Mammary epithelial cell (primary cell): ENCODE measurements at regions of chr12 and their contacts with region 1.

Region 1: DNA sequence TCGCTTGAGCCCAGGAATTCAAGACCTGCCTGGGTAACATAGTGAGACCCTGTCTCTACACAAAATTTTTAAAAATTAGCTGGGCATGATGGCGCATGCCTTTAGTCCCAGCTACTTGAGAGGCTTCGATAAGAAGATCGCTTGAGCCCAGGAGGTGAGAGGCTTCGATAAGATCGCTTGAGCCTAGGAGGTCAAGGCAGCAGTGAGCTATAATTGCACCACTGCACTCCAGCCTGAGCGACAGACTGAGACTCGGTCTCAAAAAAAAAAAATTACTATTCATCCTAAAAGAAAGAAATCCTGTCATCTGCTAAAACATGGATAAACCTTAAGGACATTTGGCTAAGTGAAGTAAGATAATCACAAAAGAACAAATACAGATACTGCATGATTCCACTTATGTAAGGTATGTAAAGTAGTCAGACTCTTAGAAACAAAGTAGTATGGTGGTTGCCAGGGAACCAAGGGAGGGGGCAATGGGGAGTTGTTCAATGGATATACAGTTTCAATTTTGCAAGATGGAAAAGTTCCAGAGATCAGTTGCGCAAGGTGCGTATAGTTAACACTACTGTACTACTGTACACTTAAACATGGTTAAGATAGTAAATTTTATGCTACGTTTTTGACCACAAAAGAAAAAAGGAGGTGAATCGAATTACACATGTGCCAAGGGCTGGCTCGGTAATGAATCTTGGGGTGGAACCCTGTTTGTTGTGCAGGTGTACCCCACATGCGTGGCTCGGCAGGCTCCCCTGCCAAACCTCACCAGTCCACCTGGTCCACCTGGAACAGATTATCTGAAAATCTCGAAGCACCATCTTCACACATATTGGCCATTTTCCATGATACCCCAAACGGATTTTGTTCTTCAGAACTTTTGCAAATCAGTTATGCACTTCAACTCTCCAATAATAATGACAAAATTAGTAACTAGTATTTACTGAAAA is 18.3 kb upstream of the ATP2A2 start:
- DNase-seq: no peak
- H3K4me3 ChIP-seq: no peak overlapping the region
- H3K27ac ChIP-seq: no peak overlapping the region
- H3K4me1 ChIP-seq: peaks cover 4% of the 10 kb centered on the region
- H3K27me3 ChIP-seq: no peaks in the 10 kb centered on the region
- CTCF ChIP-seq: no peak

Region 2: GRCh38 chr12:110245369-110245772 is 17.3 kb before region 1 on chr12:
- CTCF ChIA-PET with region 1: no interaction called
- dilution Hi-C with region 1: no loop called
- in situ Hi-C with region 1: no loop called
- intact Hi-C with region 1: loop called (anchors 2 kb)
- DNase-seq: no peak
- H3K4me3 ChIP-seq: no peak overlapping the region
- H3K27ac ChIP-seq: no peak overlapping the region
- H3K4me1 ChIP-seq: peaks cover 39% of the 10 kb centered on the region
- H3K27me3 ChIP-seq: no peaks in the 10 kb centered on the region
- CTCF ChIP-seq: peak; percentile 41 to 51